CD4-positive, alpha-beta memory T cell (primary cell): ENCODE measurements at regions of chr15 and their contacts with region 1.

Region 1: GRCh38 chr15:72155635-72156616 is 37.7 kb downstream of the SENP8 start:
- DNase-seq: peak; percentile 66 to 76 (median 71)
- H3K4me3 ChIP-seq: no peak overlapping the region
- H3K4me3 Mint-ChIP-seq: peak overlapping the region; percentile 66 to 90 (median 82)
- H3K27ac ChIP-seq: no peak overlapping the region
- H3K27ac Mint-ChIP-seq: peak overlapping the region in 1 of 7 donors; percentile 66
- H3K4me1 ChIP-seq: no peaks in the 10 kb centered on the region
- H3K4me1 Mint-ChIP-seq: peaks cover 0 to 1% (median 0%) of the 10 kb centered on the region in 4 donors
- H3K27me3 ChIP-seq: no peaks in the 10 kb centered on the region
- H3K27me3 Mint-ChIP-seq: peaks cover 0 to 2% of the 10 kb centered on the region in 2 donors

Region 2: GRCh38 chr15:71386448-71387236 is 769.3 kb before region 1 on chr15:
- CTCF ChIA-PET with region 1: interaction called, 3 read pairs
- POLR2A ChIA-PET with region 1: no interaction called
- intact Hi-C with region 1: loop called (anchors 5 kb)
- DNase-seq: peak in 4 of 5 donors; percentile 14 to 27 (median 18)
- H3K4me3 ChIP-seq: no peak overlapping the region
- H3K4me3 Mint-ChIP-seq: peak overlapping the region in 2 of 8 donors; percentile 20 to 32
- H3K27ac ChIP-seq: no peak overlapping the region
- H3K27ac Mint-ChIP-seq: peak overlapping the region in 1 of 7 donors; percentile 5
- H3K4me1 ChIP-seq: no peaks in the 10 kb centered on the region
- H3K4me1 Mint-ChIP-seq: peaks cover 0 to 10% (median 7%) of the 10 kb centered on the region in 4 donors
- H3K27me3 ChIP-seq: peaks cover 3% of the 10 kb centered on the region
- H3K27me3 Mint-ChIP-seq: peaks cover 1 to 9% of the 10 kb centered on the region in 2 donors

Region 3: GRCh38 chr15:71737761-71738160 is 418.2 kb before region 1 on chr15:
- CTCF ChIA-PET with region 1: interaction called, 87 read pairs
- POLR2A ChIA-PET with region 1: no interaction called
- intact Hi-C with region 1: no loop called
- DNase-seq: no peak
- H3K4me3 ChIP-seq: no peak overlapping the region
- H3K4me3 Mint-ChIP-seq: no peak overlapping the region
- H3K27ac ChIP-seq: no peak overlapping the region
- H3K27ac Mint-ChIP-seq: peak overlapping the region in 1 of 7 donors; percentile 33
- H3K4me1 ChIP-seq: no peaks in the 10 kb centered on the region
- H3K4me1 Mint-ChIP-seq: no peaks in the 10 kb centered on the region
- H3K27me3 ChIP-seq: no peaks in the 10 kb centered on the region
- H3K27me3 Mint-ChIP-seq: peaks cover 0 to 6% of the 10 kb centered on the region in 2 donors

Region 4: DNA sequence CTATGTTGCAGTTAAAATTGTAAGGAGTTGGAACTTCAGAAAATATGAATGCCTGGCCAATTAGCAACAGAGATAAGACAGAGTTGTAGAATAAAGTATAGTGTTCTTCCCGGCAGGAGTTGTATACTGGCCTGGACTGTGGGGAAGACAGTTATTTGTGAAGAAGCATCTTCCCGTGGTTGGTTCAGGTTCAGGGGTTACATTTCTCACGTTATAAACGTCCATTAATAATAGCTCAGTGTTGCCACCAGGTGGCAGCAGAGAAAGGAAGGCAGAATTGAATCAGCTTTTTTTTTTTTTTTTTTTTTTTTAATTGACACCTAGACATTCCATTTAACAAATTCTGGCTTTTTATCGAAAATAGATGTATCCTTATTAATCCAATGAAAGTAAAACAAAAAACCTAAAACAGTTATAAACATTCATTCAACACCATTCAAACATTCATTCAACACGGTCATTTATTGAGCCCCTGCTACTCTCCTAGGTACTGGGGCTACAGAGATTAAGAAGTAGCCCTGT is 412.0 kb before region 1 on chr15:
- CTCF ChIA-PET with region 1: interaction called, 87 read pairs
- POLR2A ChIA-PET with region 1: no interaction called
- intact Hi-C with region 1: loop called (anchors 1 kb)
- DNase-seq: peak; percentile 38 to 53 (median 42)
- H3K4me3 ChIP-seq: no peak overlapping the region
- H3K4me3 Mint-ChIP-seq: no peak overlapping the region
- H3K27ac ChIP-seq: no peak overlapping the region
- H3K27ac Mint-ChIP-seq: no peak overlapping the region
- H3K4me1 ChIP-seq: no peaks in the 10 kb centered on the region
- H3K4me1 Mint-ChIP-seq: peaks cover 0 to 2% (median under 1%) of the 10 kb centered on the region in 4 donors
- H3K27me3 ChIP-seq: no peaks in the 10 kb centered on the region
- H3K27me3 Mint-ChIP-seq: peaks cover 4 to 5% of the 10 kb centered on the region in 2 donors

Region 5: GRCh38 chr15:71780115-71780976 is 375.6 kb before region 1 on chr15:
- CTCF ChIA-PET with region 1: interaction called, 62 read pairs
- POLR2A ChIA-PET with region 1: no interaction called
- intact Hi-C with region 1: loop called (anchors 1 kb)
- DNase-seq: peak in 4 of 5 donors; percentile 25 to 37 (median 32)
- H3K4me3 ChIP-seq: no peak overlapping the region
- H3K4me3 Mint-ChIP-seq: peak overlapping the region in 1 of 8 donors; percentile 6
- H3K27ac ChIP-seq: no peak overlapping the region
- H3K27ac Mint-ChIP-seq: no peak overlapping the region
- H3K4me1 ChIP-seq: no peaks in the 10 kb centered on the region
- H3K4me1 Mint-ChIP-seq: peaks cover 0 to 3% (median 1%) of the 10 kb centered on the region in 4 donors
- H3K27me3 ChIP-seq: no peaks in the 10 kb centered on the region
- H3K27me3 Mint-ChIP-seq: peaks cover 4 to 15% of the 10 kb centered on the region in 2 donors

Region 6: DNA sequence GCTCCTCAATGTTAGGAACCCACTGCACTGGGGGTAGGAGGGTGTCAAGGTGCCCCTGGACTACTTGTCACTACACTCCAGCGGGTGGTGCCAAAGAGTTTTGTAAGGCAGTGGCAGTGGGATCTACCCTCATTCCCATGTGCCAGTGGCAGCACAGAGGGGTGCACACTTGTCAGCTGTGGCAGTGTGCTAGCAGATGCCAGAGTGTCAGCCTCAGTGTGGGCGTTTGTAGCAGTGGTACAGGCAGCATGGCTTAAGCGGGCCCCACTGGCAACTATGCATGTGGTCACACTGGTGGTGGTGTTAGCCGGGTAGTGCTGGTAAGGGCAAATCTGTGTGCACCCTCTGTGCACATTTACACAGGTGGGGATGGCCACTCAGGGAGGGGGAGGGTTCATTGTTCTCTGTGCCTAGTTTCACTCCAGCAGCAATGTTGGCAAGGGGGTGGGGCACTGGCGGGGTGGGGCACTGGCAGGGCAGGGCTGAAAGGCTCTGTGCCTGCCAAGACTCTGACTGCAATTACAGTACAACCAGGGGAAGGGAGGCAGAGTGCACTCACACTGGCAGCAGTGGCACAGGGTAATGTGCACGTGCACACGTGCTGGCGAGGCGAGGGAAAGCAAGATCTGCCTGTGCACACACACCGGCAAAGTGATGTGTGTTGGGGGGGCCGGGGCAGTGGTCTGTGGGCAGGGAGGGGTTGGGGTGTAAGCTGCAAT is 69.8 kb before region 1 on chr15:
- CTCF ChIA-PET with region 1: no interaction called
- POLR2A ChIA-PET with region 1: no interaction called
- intact Hi-C with region 1: no loop called
- DNase-seq: no peak
- H3K4me3 ChIP-seq: no peak overlapping the region
- H3K4me3 Mint-ChIP-seq: no peak overlapping the region
- H3K27ac ChIP-seq: no peak overlapping the region
- H3K27ac Mint-ChIP-seq: no peak overlapping the region
- H3K4me1 ChIP-seq: no peaks in the 10 kb centered on the region
- H3K4me1 Mint-ChIP-seq: peaks cover 0 to 5% (median 2%) of the 10 kb centered on the region in 4 donors
- H3K27me3 ChIP-seq: no peaks in the 10 kb centered on the region
- H3K27me3 Mint-ChIP-seq: no peaks in the 10 kb centered on the region

Region 7: GRCh38 chr15:72199711-72200212 is 43.8 kb after region 1 on chr15:
- CTCF ChIA-PET with region 1: no interaction called
- POLR2A ChIA-PET with region 1: no interaction called
- intact Hi-C with region 1: no loop called
- DNase-seq: peak; percentile 69 to 78 (median 72)
- H3K4me3 ChIP-seq: no peak overlapping the region
- H3K4me3 Mint-ChIP-seq: no peak overlapping the region
- H3K27ac ChIP-seq: no peak overlapping the region
- H3K27ac Mint-ChIP-seq: peak overlapping the region in 3 of 7 donors; percentile 30 to 53 (median 48)
- H3K4me1 ChIP-seq: peaks cover 4% of the 10 kb centered on the region
- H3K4me1 Mint-ChIP-seq: peaks cover 0 to 14% (median 9%) of the 10 kb centered on the region in 4 donors
- H3K27me3 ChIP-seq: no peaks in the 10 kb centered on the region
- H3K27me3 Mint-ChIP-seq: peaks cover 2 to 3% of the 10 kb centered on the region in 2 donors

Region 8: GRCh38 chr15:72272213-72273002 is 116.5 kb after region 1 on chr15 and contains the start of gene PARP6:
- CTCF ChIA-PET with region 1: no interaction called
- POLR2A ChIA-PET with region 1: no interaction called
- intact Hi-C with region 1: no loop called
- DNase-seq: peak; percentile 98 to 100 (median 100)
- H3K4me3 ChIP-seq: peak within 1 kb of the TSS; percentile 26 to 65
- H3K4me3 Mint-ChIP-seq: peak within 1 kb of the TSS; percentile 85 to 93 (median 88)
- H3K27ac ChIP-seq: peak within 1 kb of the TSS; percentile 87
- H3K27ac Mint-ChIP-seq: peak within 1 kb of the TSS; percentile 93 to 97 (median 95)
- H3K4me1 ChIP-seq: peaks cover 34% of the 10 kb centered on the region
- H3K4me1 Mint-ChIP-seq: peaks cover 27 to 43% (median 36%) of the 10 kb centered on the region in 4 donors
- H3K27me3 ChIP-seq: no peaks in the 10 kb centered on the region
- H3K27me3 Mint-ChIP-seq: no peaks in the 10 kb centered on the region
- total RNA-seq, gene PARP6: 111 TPM